Posterior vena cava (tissue), 2 donors: ENCODE measurements at regions of chr10 and their contacts with region 1.

Region 1: DNA sequence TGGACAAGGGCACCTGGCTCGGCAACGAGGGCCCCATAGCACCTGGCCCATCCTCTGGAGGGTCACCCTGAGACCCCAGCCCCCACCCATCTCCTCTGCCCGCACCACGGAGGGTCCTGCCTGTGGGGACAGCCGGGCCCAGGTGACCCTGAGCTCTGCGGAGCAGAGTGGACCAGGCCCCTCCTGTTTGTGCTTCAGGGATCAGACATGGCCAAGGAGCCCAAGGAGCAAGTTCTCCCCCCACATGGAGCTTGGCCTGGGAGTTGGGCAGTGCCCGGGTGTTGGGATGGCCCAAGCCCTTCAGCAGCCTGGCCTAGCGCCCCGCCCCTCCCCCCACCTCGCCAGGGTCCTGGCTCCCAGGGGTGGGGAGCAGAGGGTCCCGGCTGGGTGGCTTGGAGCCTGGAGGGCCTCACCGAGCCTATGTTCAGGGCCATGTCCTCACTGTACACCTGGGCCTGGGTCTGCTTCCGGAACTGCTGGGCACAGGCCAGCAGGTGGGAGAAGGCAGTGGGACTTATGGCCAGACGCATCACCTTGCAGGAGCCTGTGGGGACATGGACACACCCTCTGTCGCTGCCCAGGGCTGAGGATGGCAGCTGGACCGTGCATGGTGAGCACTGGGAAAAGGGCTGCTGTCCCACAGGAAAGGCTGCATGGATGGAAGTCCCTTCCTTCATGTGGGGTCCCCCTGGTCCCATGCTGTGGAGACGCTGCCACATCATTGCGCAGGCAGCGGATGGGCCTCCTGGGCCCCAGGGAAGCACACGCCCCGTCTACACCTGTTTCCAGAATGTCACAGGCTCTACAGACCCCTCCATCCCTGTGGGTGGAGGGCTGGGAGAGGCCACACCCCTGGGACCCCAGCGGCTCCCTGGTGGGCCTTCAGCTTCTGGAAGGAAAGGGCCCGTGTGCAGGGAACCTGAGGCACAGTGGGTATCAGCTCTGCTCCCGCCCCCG is 49.2 kb upstream of the NKX6-2 start:
- DNase-seq: no peak

Region 2: GRCh38 chr10:131694781-131695495 is 1140.2 kb before region 1 on chr10:
- intact Hi-C with region 1: loop called in 1 of 2 experiments (anchors 5 kb)
- DNase-seq: peak; percentile 56

Region 3: DNA sequence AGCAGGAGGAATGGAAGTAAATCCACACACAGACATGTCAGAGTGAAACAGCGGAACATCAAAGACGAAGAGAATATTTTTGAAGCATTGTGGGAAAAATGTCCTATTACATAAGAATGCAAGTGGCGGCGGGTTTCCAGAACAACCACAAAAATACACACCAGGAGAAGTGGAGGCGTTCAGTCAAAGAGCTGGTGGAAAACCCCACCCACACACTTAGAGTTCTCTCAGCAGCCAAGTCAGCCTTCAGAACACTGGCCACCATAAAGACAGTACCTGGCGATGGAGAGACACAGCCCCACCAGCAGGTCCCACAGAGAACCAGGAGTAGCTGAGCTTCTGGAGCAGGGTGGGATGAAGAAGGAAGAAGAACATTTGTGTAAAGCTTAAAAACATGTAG is 72.9 kb before region 1 on chr10:
- intact Hi-C with region 1: loop called in 1 of 2 experiments (anchors 1 kb)
- DNase-seq: no peak

Region 4: GRCh38 chr10:132858121-132859081 is 23.2 kb after region 1 on chr10:
- intact Hi-C with region 1: no loop called
- DNase-seq: peak; percentile 69

Region 5: GRCh38 chr10:133044401-133044804 is 209.2 kb after region 1 on chr10:
- intact Hi-C with region 1: no loop called
- DNase-seq: no peak